Calu3 (cell line): ENCODE measurements at regions of chr4 and their contacts with region 1.

Region 1: GRCh38 chr4:137819964-137820383 is 287.7 kb upstream of the PCDH18 start:
- DNase-seq: peak; percentile 32
- H3K4me3 Mint-ChIP-seq: no peak overlapping the region
- H3K27ac Mint-ChIP-seq: no peak overlapping the region
- H3K4me1 Mint-ChIP-seq: no peaks in the 10 kb centered on the region
- H3K27me3 Mint-ChIP-seq: no peaks in the 10 kb centered on the region
- CTCF ChIP-seq: peak; percentile 54

Region 2: DNA sequence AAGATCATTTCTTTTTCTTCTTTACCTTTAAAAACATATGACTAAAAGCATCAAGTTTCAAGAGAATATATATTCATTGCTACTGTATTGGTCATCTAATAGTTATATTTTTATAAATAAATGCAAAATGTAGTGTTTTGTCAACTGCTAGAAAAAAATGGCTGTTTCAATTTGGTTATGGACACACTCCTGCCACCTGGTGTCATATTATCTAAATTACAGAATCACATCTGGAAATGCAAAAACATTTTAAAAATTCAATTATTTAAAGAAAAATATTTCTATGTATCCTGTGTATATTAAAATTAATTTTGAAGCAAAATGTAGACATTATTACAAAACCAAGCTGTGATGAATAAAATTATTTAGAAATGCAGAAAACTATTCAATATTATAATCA is 41.7 kb after region 1 on chr4:
- CTCF ChIA-PET with region 1: no interaction called
- intact Hi-C with region 1: loop called (anchors 1 kb)
- DNase-seq: no peak
- H3K4me3 Mint-ChIP-seq: no peak overlapping the region
- H3K27ac Mint-ChIP-seq: no peak overlapping the region
- H3K4me1 Mint-ChIP-seq: no peaks in the 10 kb centered on the region
- H3K27me3 Mint-ChIP-seq: no peaks in the 10 kb centered on the region
- CTCF ChIP-seq: no peak

Region 3: GRCh38 chr4:138090150-138090917 is 270.4 kb after region 1 on chr4:
- CTCF ChIA-PET with region 1: interaction called, 4 read pairs
- intact Hi-C with region 1: loop called (anchors 2 kb)
- DNase-seq: peak; percentile 72
- H3K4me3 Mint-ChIP-seq: peak overlapping the region; percentile 61
- H3K27ac Mint-ChIP-seq: peak overlapping the region; percentile 22
- H3K4me1 Mint-ChIP-seq: peaks cover 33% of the 10 kb centered on the region
- H3K27me3 Mint-ChIP-seq: no peaks in the 10 kb centered on the region
- CTCF ChIP-seq: peak; percentile 30

Region 4: GRCh38 chr4:138182838-138183426 is 363.0 kb after region 1 on chr4:
- CTCF ChIA-PET with region 1: no interaction called
- intact Hi-C with region 1: loop called (anchors 2 kb)
- DNase-seq: peak; percentile 24
- H3K4me3 Mint-ChIP-seq: no peak overlapping the region
- H3K27ac Mint-ChIP-seq: peak overlapping the region; percentile 58
- H3K4me1 Mint-ChIP-seq: peaks cover 39% of the 10 kb centered on the region
- H3K27me3 Mint-ChIP-seq: no peaks in the 10 kb centered on the region
- CTCF ChIP-seq: peak; percentile 30

Region 5: GRCh38 chr4:138680989-138681604 is 861.1 kb after region 1 on chr4:
- CTCF ChIA-PET with region 1: no interaction called
- intact Hi-C with region 1: loop called (anchors 2 kb)
- DNase-seq: peak; percentile 71
- H3K4me3 Mint-ChIP-seq: no peak overlapping the region
- H3K27ac Mint-ChIP-seq: no peak overlapping the region
- H3K4me1 Mint-ChIP-seq: peaks cover 23% of the 10 kb centered on the region
- H3K27me3 Mint-ChIP-seq: no peaks in the 10 kb centered on the region
- CTCF ChIP-seq: peak; percentile 77